ENCODE measurements at regions of chr4 and their contacts with region 1.

Region 1: DNA sequence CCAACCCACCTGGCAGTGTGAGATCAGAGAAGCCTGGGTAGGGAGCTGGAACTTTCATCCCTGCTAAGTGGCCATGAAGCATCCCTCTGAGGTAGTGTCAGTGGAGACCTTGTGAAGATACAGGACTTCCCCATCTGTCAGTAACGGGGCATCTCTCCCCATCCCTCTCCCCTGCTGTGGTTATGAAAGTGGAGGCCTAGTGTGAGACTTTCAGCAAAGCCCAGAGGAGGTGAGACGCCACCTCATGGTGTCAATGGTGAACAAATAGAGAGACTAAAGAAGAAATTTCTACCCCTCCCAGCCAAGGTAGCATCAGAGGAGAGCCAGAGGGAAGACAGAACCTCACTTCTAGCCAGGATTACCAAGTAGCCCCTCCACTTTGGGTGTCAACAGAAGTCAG is 150.2 kb downstream of the VEGFC start:
- DNase-seq: no peak
- ATAC-seq: no peak

Region 2: DNA sequence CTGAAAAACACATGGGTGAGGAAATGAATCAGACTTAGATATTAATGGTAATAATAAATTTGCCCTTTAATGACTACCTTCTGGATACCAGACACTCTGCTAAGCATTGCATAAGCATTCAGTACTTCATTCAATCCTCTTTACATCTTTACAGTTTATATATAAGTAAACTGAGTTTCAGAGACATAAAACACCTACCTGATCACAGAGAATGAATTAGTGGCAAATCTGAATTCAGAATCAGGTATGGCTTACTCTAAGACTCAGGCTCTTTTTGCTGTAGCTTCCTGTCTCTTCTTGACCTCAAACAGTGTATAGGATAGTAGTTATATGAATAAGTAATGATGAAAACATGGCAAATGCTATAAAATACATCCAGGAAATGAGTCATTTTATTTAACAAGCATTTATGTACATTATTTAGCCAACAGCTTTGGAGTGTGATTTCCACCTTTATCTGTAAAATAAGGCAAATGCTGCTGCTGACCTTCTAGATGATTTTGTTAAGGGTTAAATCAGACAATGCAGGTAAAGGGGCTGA is 66.4 kb after region 1 on chr4:
- intact Hi-C with region 1: loop called (anchors 10 kb)
- DNase-seq: no peak
- ATAC-seq: no peak